Right cardiac atrium (tissue), 5 donors: ENCODE measurements at regions of chr16 and their contacts with region 1.

Region 1: DNA sequence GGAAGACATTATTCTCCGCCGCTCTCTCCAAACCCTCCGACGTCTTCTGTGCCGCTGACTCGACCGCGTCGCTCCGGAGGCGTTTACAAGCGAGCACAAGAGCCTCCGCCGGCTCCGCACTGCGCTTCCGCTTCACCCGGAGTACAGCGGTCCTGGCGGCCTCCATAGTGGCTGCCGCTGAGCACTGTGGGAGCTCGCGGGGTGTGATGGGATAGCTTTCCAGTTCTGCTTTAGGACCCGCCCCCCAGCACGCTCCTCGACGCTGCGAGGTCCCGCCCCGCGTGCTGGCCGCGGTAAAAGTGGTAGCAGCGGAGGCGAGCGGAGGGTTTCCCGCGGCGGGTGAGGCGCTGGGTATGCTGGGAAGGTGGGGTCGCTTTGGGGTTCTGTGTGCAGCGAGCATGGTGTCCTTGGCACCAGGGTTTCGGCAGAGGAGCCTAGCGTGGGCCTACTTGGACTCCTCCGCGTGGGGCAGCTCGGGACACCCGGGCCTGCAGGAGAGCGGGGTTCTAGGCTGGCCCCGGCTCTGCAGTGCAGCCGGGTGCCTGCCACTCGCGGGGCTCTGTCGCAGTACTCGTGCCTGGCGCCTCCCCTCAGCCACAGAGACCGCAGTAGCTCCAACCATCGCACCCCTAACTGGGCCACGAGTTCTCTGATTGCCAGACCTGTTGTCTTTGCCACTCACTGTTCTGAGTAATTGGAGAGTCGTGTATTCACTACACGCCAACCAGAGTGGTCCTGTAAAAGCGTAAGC is at the starts of genes PRMT7 and SLC7A6OS:
- DNase-seq: peak; percentile 92 to 96 (median 95)
- ATAC-seq: peak; percentile 100
- H3K4me3 ChIP-seq: peak within 1 kb of the TSS; percentile 87
- H3K27ac ChIP-seq: peak within 1 kb of the TSS; percentile 77
- H3K4me1 ChIP-seq: peaks cover 11% of the 10 kb centered on the region
- H3K27me3 ChIP-seq: no peaks in the 10 kb centered on the region
- total RNA-seq, gene PRMT7: 20.8 to 34.7 (median 32.2) TPM
- total RNA-seq, gene SLC7A6OS: 10.9 to 13.4 (median 11.9) TPM

Region 2: DNA sequence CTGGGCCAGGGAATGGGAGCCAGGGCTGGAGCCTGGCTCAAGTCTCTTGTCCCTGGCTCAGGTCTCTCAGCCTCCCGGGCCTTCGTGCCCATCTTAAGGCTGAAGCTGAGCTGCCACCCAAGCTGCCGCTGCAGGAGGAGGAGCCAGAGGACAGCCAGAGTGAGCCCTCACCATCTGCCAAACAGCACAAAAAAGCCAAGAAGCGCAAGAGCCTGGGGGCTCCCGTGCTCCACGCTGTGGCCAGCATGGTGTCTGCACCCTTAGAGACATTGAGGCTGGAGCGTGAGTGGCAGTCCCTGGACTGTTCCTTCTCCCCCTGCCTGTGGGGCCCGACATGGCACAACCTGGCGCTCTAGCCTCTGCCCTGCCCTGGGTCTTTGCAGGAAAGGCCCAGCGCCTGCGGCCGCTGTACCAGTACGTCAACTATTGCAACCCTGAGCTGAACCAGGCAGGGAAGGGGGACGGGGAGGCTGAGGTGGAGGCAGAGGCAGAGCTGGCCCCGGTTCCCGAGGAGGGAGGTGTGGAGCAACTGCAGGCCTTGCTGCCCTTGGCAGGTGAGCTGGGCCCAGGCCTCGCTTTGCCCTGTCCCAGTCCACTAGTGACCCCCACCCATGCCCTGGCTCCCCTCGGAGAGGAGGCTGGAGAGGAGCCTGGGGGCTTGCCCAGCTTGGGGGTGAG is 643.0 kb before region 1 on chr16:
- intact Hi-C with region 1: no loop called
- DNase-seq: peak; percentile 88 to 95 (median 94)
- ATAC-seq: peak; percentile 83 to 86
- H3K4me3 ChIP-seq: no peak overlapping the region
- H3K27ac ChIP-seq: peak overlapping the region; percentile 75
- H3K4me1 ChIP-seq: peaks cover 5% of the 10 kb centered on the region
- H3K27me3 ChIP-seq: no peaks in the 10 kb centered on the region

Region 3: DNA sequence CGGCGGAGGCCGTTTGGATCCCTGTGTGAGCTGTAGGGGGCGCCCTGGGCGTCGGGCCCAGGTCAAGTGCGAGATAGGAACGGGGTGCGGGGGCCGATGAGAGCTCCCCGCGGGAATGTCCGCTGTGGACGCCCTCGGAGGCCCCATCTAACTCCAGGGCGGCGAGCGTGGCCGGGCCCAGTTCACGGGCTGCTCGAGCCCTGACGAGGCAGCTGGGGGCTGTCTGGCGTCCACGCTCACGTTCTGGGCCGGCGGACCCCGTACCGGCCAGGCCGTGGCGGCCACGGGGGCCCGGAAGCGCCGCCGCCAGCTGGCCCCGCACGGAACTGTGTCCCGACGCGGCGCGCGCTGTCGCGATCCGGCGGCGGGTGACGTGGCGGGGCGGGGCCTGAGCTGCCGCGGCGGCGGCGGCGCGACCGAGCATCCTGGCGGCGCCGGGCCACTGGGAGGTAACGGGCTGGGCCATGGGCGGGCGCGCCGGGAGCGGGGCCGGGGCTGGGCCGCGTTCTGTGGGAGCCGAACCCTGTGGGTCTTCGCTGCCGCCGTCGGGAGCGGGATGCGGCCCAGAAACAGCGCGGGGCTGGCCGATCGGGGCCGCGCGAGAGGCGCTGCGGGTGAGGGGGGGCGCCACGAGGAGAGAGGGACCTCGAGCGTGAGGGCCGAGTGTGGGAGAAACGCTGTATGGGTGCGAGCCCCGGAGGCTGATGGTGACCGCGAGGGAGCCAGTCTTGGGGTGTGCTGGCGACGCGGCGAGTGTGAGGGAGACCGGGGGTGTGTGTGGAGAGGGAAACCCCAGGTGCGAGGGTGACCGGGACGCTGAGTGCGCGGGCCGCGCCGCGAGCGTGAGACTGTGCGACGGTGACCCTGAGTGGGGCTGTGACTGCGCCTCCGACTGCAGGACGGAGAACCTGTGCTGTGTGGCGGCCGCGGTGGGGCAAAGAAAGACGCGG is 46.5 kb before region 1 on chr16 and contains the start of gene SLC7A6:
- intact Hi-C with region 1: loop called in 3 of 4 experiments (anchors 5 kb)
- DNase-seq: peak; percentile 81 to 91 (median 91)
- ATAC-seq: peak; percentile 82
- H3K4me3 ChIP-seq: peak within 1 kb of the TSS; percentile 70
- H3K27ac ChIP-seq: peak within 1 kb of the TSS; percentile 87
- H3K4me1 ChIP-seq: no peaks in the 10 kb centered on the region
- H3K27me3 ChIP-seq: no peaks in the 10 kb centered on the region
- total RNA-seq, gene SLC7A6: 39.0 to 60.7 (median 51.3) TPM